HepG2 (cell line): ENCODE measurements at regions of chr9 and their contacts with region 1.

Region 1: DNA sequence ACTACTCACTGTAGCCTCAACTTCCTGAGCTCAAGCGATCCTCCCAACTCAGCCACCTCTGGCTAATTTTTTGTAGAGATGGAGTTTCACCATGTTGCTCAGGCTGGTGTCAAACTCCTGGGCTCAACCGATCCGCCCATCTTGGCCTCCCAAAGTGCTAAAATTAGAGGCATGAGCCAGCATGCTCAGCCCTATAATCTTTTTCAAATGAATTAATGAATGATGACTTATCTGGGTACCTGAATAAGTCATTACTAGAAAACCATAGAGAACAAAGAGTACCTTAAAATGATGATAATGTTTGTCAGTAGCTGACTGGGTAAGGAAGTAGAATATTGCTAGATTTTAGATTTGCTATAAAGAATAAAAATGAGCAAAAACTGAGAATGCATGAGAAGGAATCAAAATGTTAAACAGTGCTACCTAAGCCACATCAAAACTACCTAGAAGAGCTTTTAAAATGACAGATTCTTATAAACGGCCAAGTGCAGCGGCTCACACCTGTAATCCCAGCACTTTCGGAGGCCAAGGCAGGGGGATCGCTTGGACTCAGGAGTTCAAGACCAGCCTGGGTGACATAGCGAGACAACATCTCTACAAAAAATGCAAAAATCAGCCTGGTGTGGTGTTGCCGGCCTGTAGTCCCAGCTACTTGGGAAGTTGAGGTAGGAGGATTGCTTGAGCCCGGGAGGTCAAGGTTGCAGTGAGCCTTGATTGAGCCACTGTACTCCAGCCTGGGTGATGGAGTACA is 13.6 kb downstream of the FNBP1 start:
- DNase-seq: no peak
- ATAC-seq: peak; percentile 25; the same call in 2 of the 3 replicates
- H3K4me3 ChIP-seq: peak overlapping the region in 2 of 3 experiments; percentile 42; a peak in 3 of 6 replicates
- H3K27ac ChIP-seq: peak overlapping the region; percentile 91
- H3K4me1 ChIP-seq: peaks cover 79% of the 10 kb centered on the region
- H3K27me3 ChIP-seq: no peaks in the 10 kb centered on the region
- CTCF ChIP-seq: no peak
- EP300 ChIP-seq: no peak
- POLR2A ChIP-seq: no peak
- RAD21 ChIP-seq: no peak

Region 2: DNA sequence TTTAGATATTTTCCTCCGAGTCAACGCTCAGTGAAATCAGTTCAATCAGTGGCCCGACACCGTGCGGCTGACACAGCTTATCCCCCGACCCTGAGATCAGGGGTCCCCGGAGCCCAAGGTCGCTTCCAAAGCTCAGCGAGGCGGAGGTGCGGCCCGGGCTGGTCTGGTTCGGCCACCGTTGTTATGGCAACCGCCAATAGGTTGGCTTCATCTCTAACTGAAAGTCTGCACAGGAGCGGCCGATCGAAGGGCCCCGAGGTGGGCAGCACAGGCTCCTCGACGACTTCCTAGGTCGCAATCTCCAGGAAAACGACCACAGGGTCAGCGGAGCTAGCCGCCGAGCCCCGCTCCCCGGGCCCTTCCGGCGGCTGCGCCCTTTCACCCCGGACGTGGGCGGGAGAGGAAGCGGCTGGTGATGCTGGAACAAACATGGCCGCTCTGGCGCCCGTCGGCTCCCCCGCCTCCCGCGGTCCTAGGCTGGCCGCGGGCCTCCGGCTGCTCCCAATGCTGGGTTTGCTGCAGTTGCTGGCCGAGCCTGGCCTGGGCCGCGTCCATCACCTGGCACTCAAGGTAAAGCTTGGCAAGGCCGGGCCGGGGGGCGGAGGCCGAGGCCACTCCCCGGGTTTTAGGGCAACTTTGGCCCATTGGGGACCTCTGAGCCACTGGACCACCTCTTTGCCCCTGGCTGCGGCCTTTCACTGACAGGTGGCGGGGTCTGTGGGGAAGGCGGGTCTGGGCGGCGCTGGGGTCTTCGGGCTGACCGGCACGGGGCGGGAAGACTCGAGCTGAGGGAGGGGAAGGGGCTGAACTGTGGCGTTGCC is 24.3 kb after region 1 on chr9 and contains the start of gene GPR107:
- CTCF ChIA-PET with region 1: no interaction called
- POLR2A ChIA-PET with region 1: interaction called, 11 read pairs
- in situ Hi-C with region 1: no loop called
- intact Hi-C with region 1: no loop called
- DNase-seq: peak; percentile 61
- ATAC-seq: peak; percentile 97
- H3K4me3 ChIP-seq: peak within 1 kb of the TSS; percentile 90 to 97 (median 93)
- H3K27ac ChIP-seq: peak within 1 kb of the TSS; percentile 87
- H3K4me1 ChIP-seq: peaks cover 30% of the 10 kb centered on the region
- H3K27me3 ChIP-seq: no peaks in the 10 kb centered on the region; a peak in 1 of 5 replicates
- CTCF ChIP-seq: no peak; the same call in 1 of the 2 replicates
- EP300 ChIP-seq: 0 out of 4 replicates have a peak, but pooled peaks of 1 of the 2 experiments have one; percentile 27
- POLR2A ChIP-seq: peak; percentile 79 to 86
- RAD21 ChIP-seq: no peak; the same call in 1 of the 2 replicates
- total RNA-seq, gene GPR107: 18.7 and 22.5 TPM in 2 replicates